Right cardiac atrium (tissue), 5 donors: ENCODE measurements at regions of chr19 and their contacts with region 1.

Region 1: GRCh38 chr19:3665681-3666544 is 34.4 kb downstream of the PIP5K1C start:
- DNase-seq: peak; percentile 61 to 91 (median 87)
- ATAC-seq: peak; percentile 17 to 30
- H3K4me3 ChIP-seq: no peak overlapping the region
- H3K27ac ChIP-seq: no peak overlapping the region
- H3K4me1 ChIP-seq: peaks cover 3% of the 10 kb centered on the region
- H3K27me3 ChIP-seq: no peaks in the 10 kb centered on the region

Region 2: DNA sequence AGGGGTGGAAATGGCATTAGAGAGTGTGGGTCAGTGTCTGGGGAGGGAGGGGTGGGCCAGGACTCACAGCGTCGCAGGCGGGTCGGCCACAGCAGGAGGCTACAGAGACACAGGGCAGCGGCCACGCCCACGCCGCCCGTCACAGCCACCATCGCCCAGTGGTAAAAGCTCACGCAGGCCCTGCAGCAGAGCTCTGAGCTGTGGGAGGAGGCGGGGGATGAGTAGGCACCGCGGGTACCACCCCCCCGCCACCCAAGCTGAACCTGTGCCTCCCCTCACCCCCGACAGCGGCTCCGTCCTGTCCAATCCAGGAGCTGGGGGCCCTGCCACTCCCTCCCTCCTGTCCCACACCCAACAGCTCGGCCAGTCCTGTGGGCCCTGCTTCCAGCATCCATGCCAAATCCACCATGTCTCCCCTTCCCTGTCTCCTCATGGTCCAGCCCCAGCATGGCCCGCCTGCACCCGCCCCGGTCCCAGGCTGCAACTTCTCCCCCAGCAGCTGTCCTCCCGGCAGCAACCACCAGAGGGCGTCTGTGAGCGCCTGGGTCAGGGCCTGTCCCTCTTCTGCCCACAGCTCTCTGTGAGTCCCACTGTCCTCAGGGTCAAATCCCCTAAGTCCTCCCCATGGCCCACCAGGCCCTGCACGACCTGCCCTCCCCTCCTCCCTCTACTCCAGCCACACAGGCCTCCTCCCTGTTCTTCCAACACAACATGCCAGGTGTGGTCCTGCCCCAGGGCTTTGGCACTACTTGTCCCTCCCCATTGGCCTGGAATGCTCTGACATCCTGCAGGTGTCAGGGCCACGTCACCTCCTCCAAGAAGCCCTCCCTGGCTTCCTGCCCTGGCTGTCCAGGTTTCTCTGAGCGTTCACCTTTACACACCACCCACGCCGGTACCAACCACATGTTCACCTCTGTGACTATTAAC is 120.9 kb before region 1 on chr19:
- intact Hi-C with region 1: no loop called
- DNase-seq: peak; percentile 67 to 92 (median 86)
- ATAC-seq: peak; percentile 44 to 70
- H3K4me3 ChIP-seq: no peak overlapping the region
- H3K27ac ChIP-seq: no peak overlapping the region
- H3K4me1 ChIP-seq: no peaks in the 10 kb centered on the region
- H3K27me3 ChIP-seq: no peaks in the 10 kb centered on the region

Region 3: DNA sequence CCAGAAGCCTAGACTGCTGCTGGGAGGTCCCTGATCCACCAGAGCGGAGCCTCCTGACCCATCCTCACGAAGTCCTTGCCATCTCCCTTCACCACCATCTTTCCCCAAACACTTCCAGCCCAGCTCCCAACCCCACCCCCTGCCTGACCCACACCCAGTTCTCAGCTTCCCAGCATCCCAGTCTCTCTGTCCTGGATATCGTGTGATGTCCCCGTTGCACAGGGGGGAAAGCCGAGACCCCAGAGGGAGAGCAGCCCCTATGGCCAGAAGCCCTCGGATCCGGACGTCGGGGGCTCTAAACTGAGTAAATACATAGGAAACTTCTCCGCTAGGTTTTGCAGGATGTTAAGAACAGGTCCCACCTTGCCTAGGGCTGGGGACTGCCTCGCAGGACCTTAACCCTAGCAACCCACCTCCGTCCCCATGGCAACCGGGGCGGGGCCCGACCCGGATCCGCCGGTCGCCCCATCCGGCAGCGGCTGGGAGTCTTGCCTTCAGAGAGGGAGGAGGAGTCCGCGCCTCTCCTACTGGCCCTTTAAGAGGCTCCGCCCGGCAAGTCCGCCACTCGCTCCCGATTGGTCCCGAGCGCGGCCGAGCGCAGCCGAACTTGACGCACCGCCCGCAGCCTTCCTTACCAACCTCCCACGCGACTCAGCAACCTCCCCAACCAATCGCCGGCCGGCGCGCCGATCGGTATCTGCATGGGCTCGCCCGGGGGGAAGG is 93.6 kb before region 1 on chr19:
- intact Hi-C with region 1: no loop called
- DNase-seq: peak; percentile 100
- ATAC-seq: peak; percentile 96 to 98
- H3K4me3 ChIP-seq: peak overlapping the region; percentile 57
- H3K27ac ChIP-seq: no peak overlapping the region
- H3K4me1 ChIP-seq: no peaks in the 10 kb centered on the region
- H3K27me3 ChIP-seq: no peaks in the 10 kb centered on the region

Region 4: GRCh38 chr19:3700221-3701032 is 34.5 kb after region 1 on chr19 and contains the start of gene PIP5K1C:
- intact Hi-C with region 1: loop called in 3 of 4 experiments (anchors 2 to 5 kb)
- DNase-seq: peak; percentile 89 to 97 (median 96)
- ATAC-seq: peak; percentile 88 to 92
- H3K4me3 ChIP-seq: peak within 1 kb of the TSS; percentile 94
- H3K27ac ChIP-seq: peak within 1 kb of the TSS; percentile 83
- H3K4me1 ChIP-seq: peaks cover 6% of the 10 kb centered on the region
- H3K27me3 ChIP-seq: no peaks in the 10 kb centered on the region
- total RNA-seq, gene PIP5K1C: 38.8 to 48.3 (median 40.4) TPM

Region 5: DNA sequence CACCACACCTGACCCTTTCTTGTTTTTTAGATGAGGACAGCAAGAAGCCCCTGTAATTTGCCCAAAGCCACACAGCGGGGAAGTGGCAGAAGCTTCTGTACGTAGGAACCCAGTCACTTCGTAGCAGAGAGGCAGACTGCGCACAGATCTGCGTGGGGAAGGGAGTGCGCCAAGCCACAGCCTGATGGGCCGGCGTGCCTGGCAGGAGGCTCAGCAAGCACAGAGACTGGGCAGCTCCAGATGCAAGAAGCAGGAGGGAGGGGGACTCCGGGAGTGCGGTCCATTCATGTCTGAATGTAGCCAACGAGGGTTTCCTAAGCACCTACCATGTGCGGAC is 41.9 kb after region 1 on chr19:
- intact Hi-C with region 1: loop called in 3 of 4 experiments (anchors 2 to 5 kb)
- DNase-seq: no peak
- ATAC-seq: no peak
- H3K4me3 ChIP-seq: no peak overlapping the region
- H3K27ac ChIP-seq: no peak overlapping the region
- H3K4me1 ChIP-seq: no peaks in the 10 kb centered on the region
- H3K27me3 ChIP-seq: no peaks in the 10 kb centered on the region